ENCODE measurements at regions of chr2 and their contacts with region 1.

Region 1: DNA sequence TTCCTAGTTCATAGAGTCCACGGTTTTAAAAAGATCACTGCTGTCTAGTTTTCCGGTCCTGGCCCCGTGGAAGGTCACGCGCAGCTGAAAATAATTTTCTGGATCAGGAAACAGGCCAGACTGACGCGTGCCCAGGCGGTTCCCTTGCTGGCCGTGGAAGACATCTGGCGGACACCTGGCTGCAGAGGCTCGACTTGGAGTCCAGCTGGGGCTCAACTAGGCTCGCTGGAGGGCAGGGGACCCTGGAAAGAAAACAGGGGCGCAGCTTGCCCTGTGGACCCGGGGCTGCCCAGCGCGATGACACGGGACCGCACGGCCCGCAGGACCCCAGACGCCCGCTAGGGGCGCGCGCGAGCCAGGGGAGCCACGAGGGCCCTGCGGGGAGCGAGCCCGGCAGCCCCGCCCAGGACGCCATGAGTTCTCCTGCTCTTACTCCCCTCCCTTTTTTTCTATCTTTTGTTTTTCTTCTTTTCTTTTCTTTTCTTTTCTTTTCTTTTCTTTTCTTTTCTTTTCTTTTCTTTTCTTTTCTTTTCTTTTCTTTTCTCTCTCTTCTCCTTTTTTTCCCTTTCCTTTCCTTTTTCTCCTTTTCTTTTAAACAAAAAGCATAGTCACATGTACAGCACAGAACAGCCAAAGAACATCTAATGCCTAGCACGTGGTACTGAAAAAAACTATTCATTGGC is 43.2 kb upstream of the UBE2F start:
- DNase-seq: peak; percentile 80
- ATAC-seq: peak; percentile 100
- H3K4me3 Mint-ChIP-seq: peak overlapping the region; percentile 55
- H3K27ac Mint-ChIP-seq: peak overlapping the region; percentile 35
- H3K4me1 Mint-ChIP-seq: peaks cover 14% of the 10 kb centered on the region
- H3K27me3 Mint-ChIP-seq: peaks cover 1% of the 10 kb centered on the region
- CTCF ChIP-seq: peak; percentile 81

Region 2: DNA sequence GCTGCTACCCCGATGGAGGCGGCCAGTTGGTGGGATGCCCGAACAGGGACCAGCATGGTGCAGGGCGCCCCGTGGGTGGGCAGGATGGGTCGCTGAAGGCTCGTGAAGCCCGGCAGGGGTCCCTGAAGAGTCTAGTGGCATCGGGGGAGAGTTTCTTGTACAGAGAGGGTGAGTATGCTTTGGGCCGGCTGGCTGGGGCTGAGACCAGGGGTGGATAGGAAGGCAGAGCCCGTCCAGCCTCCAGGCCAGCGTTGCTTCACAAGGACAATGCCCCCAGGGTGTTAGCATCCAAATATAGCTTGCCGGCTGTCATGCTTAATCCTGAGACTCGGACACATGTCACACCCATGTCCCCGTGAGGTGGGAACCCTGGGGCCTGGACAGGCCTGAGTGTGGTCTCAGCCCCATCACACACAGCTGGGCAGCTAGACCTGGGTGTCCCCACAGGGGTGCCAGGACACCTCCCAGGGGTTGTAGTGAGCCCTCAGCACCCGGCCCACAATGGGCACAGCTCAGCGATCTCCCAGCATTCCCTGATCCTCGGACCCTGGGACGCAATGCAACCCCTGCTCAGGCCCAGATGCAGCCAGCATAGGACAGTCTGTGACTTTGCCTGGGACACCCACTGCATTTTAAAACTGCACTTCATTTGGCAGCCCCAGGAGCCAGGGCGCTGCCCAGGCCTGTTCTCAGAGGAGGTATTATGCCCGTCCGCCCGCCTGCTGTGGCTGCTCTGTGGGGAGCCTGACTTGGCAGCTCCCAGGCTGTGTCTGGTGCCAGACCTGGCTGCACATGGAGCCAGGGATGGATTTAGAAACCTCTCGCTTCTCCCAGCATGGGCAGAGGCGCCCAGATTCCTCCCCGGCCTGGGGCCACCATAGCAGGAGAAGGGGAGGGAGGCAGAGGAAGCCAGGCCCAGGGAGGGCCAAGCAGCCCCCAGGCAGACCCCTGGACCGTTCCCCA is 27.8 kb before region 1 on chr2:
- CTCF ChIA-PET with region 1: interaction called, 3 read pairs
- POLR2A ChIA-PET with region 1: interaction called, 3 read pairs
- intact Hi-C with region 1: loop called (anchors 2 kb)
- DNase-seq: no peak
- ATAC-seq: no peak
- H3K4me3 Mint-ChIP-seq: no peak overlapping the region
- H3K27ac Mint-ChIP-seq: no peak overlapping the region
- H3K4me1 Mint-ChIP-seq: peaks cover 47% of the 10 kb centered on the region
- H3K27me3 Mint-ChIP-seq: no peaks in the 10 kb centered on the region
- CTCF ChIP-seq: no peak

Region 3: DNA sequence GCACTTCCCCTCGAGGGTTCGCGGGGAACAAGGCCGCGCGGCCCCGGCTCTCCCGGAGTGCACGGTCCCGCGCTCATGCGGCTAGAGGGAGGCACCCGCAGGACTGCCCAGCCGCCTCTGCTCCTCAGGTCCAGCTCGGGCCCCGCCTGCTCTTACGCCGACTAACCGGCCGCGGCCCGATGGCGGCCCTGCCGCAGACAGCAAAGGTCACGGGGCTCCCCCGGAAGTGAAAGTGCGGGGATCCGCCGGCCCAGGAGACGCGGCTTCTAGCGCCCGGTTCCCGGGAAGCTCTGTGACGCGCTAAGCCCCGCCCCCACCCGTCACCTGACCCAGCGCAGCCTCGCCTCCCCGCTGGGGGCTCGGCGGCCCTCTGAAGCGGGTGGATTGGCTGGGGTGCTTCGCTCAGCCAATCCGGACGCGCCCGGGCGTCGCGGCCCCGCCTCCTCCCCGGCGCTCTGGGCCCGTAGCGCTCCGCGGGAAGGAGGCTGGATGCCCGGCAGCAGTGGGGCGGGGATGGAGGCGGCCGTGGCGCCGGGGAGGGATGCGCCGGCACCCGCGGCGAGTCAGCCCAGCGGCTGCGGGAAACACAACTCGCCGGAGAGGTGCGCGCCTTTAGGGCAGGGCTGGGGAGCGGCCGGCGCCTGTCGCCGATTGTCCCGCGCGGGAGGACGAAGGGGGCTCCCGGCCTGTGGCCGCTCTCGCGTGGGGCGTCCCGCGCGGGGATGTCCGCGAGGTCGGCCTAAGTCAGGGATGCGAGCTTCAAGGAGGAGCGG is 137.1 kb after region 1 on chr2 and contains the start of gene SCLY:
- CTCF ChIA-PET with region 1: no interaction called
- POLR2A ChIA-PET with region 1: no interaction called
- intact Hi-C with region 1: loop called (anchors 5 kb)
- DNase-seq: peak; percentile 89
- ATAC-seq: peak; percentile 98
- H3K4me3 Mint-ChIP-seq: peak within 1 kb of the TSS; percentile 85
- H3K27ac Mint-ChIP-seq: peak within 1 kb of the TSS; percentile 78
- H3K4me1 Mint-ChIP-seq: peaks cover 20% of the 10 kb centered on the region
- H3K27me3 Mint-ChIP-seq: peaks cover 10% of the 10 kb centered on the region
- CTCF ChIP-seq: no peak
- total RNA-seq, gene SCLY: 24.1 and 26.9 TPM in 2 replicates

Region 4: DNA sequence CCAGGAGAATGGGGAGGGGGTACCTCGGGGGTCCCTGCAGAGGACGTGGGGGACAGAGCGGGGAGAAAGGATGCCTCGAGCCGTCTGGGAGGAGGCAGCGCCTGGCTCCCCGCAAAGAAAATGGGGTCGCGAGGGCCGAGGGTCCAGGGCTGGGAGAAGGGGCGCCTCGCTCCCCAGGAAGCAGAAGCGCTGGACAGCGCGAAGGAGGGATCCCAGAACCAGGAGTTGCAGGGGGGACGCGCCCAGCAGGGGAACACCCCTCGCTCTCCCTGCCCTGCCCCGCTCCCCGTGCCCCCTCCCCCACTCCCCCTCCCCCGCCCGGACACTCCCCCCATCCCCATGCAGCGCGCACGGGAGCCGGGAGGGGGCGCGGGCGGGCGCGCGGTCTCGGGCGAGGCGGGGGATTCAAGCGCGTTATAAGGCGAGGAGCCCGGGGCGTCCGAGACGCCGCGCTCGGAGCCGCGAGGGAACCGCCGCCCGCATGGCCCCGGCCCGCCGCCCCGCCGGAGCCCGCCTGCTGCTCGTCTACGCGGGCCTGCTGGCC is 235.0 kb after region 1 on chr2 and contains the start of gene ERFE:
- CTCF ChIA-PET with region 1: no interaction called
- POLR2A ChIA-PET with region 1: no interaction called
- intact Hi-C with region 1: loop called (anchors 2 kb)
- DNase-seq: peak; percentile 58
- ATAC-seq: peak; percentile 90
- H3K4me3 Mint-ChIP-seq: peak within 1 kb of the TSS; percentile 70
- H3K27ac Mint-ChIP-seq: no peak within 1 kb of the TSS
- H3K4me1 Mint-ChIP-seq: peaks cover 12% of the 10 kb centered on the region
- H3K27me3 Mint-ChIP-seq: peaks cover 11% of the 10 kb centered on the region
- CTCF ChIP-seq: no peak
- total RNA-seq, gene ERFE: not detected in 2 replicates

Region 5: GRCh38 chr2:238263204-238264071 is 339.8 kb after region 1 on chr2:
- CTCF ChIA-PET with region 1: interaction called, 6 read pairs
- POLR2A ChIA-PET with region 1: no interaction called
- intact Hi-C with region 1: loop called (anchors 1 kb)
- DNase-seq: peak; percentile 53
- ATAC-seq: peak; percentile 57
- H3K4me3 Mint-ChIP-seq: no peak overlapping the region
- H3K27ac Mint-ChIP-seq: no peak overlapping the region
- H3K4me1 Mint-ChIP-seq: peaks cover 3% of the 10 kb centered on the region
- H3K27me3 Mint-ChIP-seq: no peaks in the 10 kb centered on the region
- CTCF ChIP-seq: peak; percentile 54

Measured in activated B cell treated with CpG ODN at 0.5 μM for 24 hours (primary cell).